ENCODE measurements at regions of chr6 and their contacts with region 1.

Region 1: GRCh38 chr6:44475779-44476434 is 88.4 kb downstream of the CDC5L start:
- DNase-seq: peak; percentile 72 to 82
- H3K4me3 ChIP-seq: no peak overlapping the region
- H3K27ac ChIP-seq: no peak overlapping the region
- H3K4me1 ChIP-seq: peaks cover 0 to 7% (median 5%) of the 10 kb centered on the region in 4 donors
- H3K27me3 ChIP-seq: peaks cover 0 to 7% of the 10 kb centered on the region in 2 donors
- CTCF ChIP-seq: peak; percentile 91 to 97

Region 2: GRCh38 chr6:45714741-45715507 is 1239.0 kb after region 1 on chr6:
- intact Hi-C with region 1: loop called (anchors 10 kb)
- DNase-seq: peak in 1 of 2 donors; percentile 43
- H3K4me3 ChIP-seq: peak overlapping the region in 1 of 2 donors; percentile 26
- H3K27ac ChIP-seq: no peak overlapping the region
- H3K4me1 ChIP-seq: peaks cover 0 to 5% (median 2%) of the 10 kb centered on the region in 4 donors
- H3K27me3 ChIP-seq: peaks cover 0 to 9% of the 10 kb centered on the region in 2 donors
- CTCF ChIP-seq: peak; percentile 73 to 80

Region 3: GRCh38 chr6:45922728-45923351 is 1446.9 kb after region 1 on chr6:
- intact Hi-C with region 1: loop called (anchors 10 kb)
- DNase-seq: peak; percentile 72 to 74
- H3K4me3 ChIP-seq: no peak overlapping the region
- H3K27ac ChIP-seq: no peak overlapping the region
- H3K4me1 ChIP-seq: no peaks in the 10 kb centered on the region
- H3K27me3 ChIP-seq: peaks cover 0 to 7% of the 10 kb centered on the region in 2 donors
- CTCF ChIP-seq: peak; percentile 41 to 48

Measured in tibial artery (tissue), 4 donors.